HCT116 (cell line): ENCODE measurements at regions of chr1 and their contacts with region 1.

Region 1: DNA sequence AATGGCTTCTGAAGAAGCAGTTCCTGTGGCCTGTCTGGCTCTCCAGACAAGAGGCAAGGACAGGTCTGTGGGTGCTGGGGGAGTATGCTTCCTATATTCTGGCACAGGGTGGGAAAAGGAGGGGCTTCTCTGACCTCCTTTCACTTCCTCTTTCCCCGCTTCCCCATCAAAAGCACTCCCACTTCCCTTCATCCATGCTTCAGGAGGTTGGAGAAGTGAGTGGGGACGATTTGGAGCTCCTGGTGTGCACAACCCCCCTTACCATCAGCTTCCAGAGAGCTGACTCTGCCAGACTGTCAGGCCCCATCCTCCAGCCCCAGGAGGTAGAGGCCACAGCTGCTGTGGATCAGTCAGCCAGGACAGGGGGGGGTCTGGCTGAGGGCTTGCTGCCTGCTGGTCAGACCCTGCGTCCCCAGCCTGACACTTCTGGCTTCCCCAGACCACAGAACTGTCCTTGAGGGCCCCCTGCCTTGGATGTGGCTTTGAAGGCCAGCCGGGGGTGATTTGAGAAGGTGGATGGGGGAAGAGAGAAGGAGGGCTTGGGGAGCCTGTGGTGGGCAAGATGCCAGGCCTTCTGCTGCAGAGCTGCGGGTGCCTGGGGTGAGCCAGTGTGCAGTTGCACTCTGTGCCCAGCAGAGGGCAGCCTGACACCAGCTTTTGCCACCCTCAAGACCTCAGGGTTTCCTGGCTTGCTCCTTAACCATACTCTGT is 21.5 kb upstream of the TMEM222 start:
- DNase-seq: peak; percentile 69
- ATAC-seq: peak; percentile 94
- H3K4me3 ChIP-seq: no peak overlapping the region
- H3K27ac ChIP-seq: no peak overlapping the region
- H3K4me1 ChIP-seq: peaks cover 0 to 7% of the 10 kb centered on the region in 2 experiments; a peak in 2 of 4 replicates
- H3K27me3 ChIP-seq: no peaks in the 10 kb centered on the region
- CTCF ChIP-seq: peak; percentile 91 to 93 (median 93)
- POLR2A ChIP-seq: no peak
- RAD21 ChIP-seq: peak; percentile 99

Region 2: GRCh38 chr1:27087371-27088220 is 212.9 kb before region 1 on chr1:
- CTCF ChIA-PET with region 1: no interaction called
- POLR2A ChIA-PET with region 1: no interaction called
- RAD21 ChIA-PET with region 1: no interaction called
- intact Hi-C with region 1: no loop called
- DNase-seq: no peak
- ATAC-seq: no peak
- H3K4me3 ChIP-seq: no peak overlapping the region
- H3K27ac ChIP-seq: no peak overlapping the region
- H3K4me1 ChIP-seq: no peaks in the 10 kb centered on the region
- H3K27me3 ChIP-seq: no peaks in the 10 kb centered on the region
- CTCF ChIP-seq: no peak
- POLR2A ChIP-seq: no peak
- RAD21 ChIP-seq: no peak

Region 3: DNA sequence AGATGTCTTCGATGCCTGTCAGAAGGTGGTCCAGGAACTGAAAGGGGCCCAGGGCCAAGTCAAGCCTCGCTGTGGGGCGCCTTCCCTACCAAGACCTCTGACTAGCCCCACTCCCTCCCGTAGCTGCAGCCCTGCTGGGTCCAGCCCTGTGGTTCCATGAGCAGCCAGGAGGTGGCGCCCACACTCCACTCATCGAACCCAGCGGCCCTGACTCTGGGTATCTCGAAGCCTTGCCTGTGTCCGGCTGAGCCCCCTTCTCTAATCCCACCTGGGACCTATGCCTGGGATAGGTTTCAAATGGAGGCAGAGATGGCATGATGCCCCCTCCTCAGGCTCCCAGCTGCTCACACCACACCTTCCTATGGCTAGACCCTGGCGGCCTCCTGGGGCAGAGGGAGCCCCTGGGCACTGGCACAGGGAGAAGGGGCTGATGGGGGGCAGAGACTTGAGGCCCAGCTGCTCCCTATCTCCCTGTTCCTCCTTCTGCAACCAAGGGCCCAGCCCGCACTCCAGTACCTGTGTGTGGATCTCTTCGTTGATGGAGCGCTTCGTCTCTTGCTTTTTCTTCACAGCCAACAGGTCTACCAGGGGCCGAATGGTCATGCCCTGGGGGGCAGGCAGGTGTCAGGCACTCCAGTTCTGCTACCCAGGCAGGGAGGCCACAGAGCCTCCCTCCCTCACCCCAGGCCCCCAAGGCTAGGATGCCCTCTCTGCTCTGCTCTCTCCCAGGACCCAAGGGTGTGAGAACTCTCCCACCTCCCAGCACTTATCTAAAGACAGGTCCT is 197.6 kb before region 1 on chr1:
- CTCF ChIA-PET with region 1: interaction called, 16 read pairs
- POLR2A ChIA-PET with region 1: interaction called, 3 read pairs
- RAD21 ChIA-PET with region 1: interaction called in 1 of 2 experiments, 3 read pairs
- intact Hi-C with region 1: no loop called
- DNase-seq: no peak
- ATAC-seq: peak; percentile 83
- H3K4me3 ChIP-seq: no peak overlapping the region
- H3K27ac ChIP-seq: no peak overlapping the region
- H3K4me1 ChIP-seq: peaks cover 9 to 42% of the 10 kb centered on the region in 2 experiments
- H3K27me3 ChIP-seq: no peaks in the 10 kb centered on the region
- CTCF ChIP-seq: peak; percentile 91 to 96 (median 95)
- POLR2A ChIP-seq: no peak
- RAD21 ChIP-seq: peak; percentile 97